Panc1 (cell line): ENCODE measurements at regions of chr3 and their contacts with region 1.

Region 1: GRCh38 chr3:177174607-177175170 is 22.6 kb downstream of the TBL1XR1 start:
- DNase-seq: no peak
- ATAC-seq: no peak
- H3K4me3 ChIP-seq: no peak overlapping the region
- H3K27ac ChIP-seq: peak overlapping the region; percentile 32; the same call in 1 of the 2 replicates
- H3K4me1 ChIP-seq: peaks cover 31% of the 10 kb centered on the region
- H3K27me3 ChIP-seq: no peaks in the 10 kb centered on the region
- CTCF ChIP-seq: no peak

Region 2: GRCh38 chr3:177396716-177397115 is 222.0 kb after region 1 on chr3:
- CTCF ChIA-PET with region 1: no interaction called
- POLR2A ChIA-PET with region 1: interaction called, 11 read pairs
- in situ Hi-C with region 1: no loop called
- intact Hi-C with region 1: no loop called
- DNase-seq: no peak
- ATAC-seq: peak; percentile 56; the same call in 1 of the 2 replicates
- H3K4me3 ChIP-seq: no peak overlapping the region
- H3K27ac ChIP-seq: peak overlapping the region; percentile 60
- H3K4me1 ChIP-seq: peaks cover 7% of the 10 kb centered on the region; the same call in 1 of the 2 replicates
- H3K27me3 ChIP-seq: no peaks in the 10 kb centered on the region
- CTCF ChIP-seq: no peak

Region 3: DNA sequence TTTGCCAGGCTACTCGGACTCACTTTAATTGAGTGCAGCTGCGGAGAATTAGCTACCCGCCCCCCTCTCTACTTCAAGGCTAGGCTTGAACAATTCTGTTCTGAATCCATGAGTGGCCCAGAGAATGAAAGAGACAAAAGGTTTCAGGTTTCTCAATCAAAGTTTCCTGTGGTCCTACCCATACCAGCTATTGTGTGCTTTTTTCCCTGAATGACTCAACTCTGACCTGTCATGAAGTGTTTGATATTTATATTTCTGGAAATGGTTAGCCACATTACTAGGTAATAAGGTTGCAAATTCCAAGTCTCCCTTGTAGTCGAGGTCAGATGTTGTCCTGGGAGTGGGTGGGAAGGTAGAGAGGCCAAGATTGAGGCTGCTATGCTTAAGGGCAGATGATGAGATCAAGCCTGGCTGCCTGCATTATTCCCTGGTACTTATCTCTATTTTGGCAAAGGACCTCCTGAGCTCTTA is 415.3 kb after region 1 on chr3:
- CTCF ChIA-PET with region 1: no interaction called
- POLR2A ChIA-PET with region 1: no interaction called
- in situ Hi-C with region 1: no loop called
- intact Hi-C with region 1: no loop called
- DNase-seq: peak; percentile 18
- ATAC-seq: peak; percentile 49
- H3K4me3 ChIP-seq: no peak overlapping the region
- H3K27ac ChIP-seq: peak overlapping the region; percentile 58; the same call in 1 of the 2 replicates
- H3K4me1 ChIP-seq: peaks cover 8% of the 10 kb centered on the region; the same call in 1 of the 2 replicates
- H3K27me3 ChIP-seq: no peaks in the 10 kb centered on the region
- CTCF ChIP-seq: no peak